H1 (cell line): ENCODE measurements at regions of chr11 and their contacts with region 1.

Region 1: DNA sequence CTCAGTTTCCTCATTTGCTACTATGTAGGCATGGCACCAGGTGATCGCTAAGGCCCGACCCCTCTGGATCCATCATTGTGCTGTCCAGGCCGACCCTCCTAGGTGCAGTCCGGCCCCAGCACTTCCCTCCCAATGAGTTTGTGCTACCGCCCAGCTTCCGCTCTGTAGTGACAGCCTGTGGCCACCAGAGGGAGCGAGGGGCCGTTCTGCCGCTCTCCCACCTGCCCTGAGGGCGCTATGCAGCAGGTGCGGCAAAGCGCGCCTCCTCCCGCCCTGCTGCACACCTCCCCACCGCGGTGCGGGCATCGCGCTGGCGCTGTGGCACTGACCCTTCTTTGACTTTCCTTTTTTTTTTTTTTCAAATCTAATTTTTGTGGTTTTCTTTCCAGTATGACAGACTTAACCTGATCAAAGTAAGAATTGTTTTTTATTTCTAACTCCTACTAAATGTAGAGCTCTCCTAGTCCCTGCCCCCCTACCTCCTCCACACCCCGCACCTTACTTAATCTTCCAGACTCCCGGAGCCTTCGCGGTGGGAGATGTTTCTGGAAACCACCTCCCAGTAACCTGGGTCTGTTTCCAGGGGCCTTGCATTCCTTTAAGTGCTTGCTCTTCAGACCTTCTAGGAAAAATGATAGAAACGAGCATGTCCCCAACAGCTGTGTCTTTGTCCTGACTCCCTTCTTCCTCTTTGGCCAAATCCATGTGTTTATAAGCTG is 73.7 kb downstream of the SCN3B start:
- DNase-seq: peak; percentile 67 to 87
- H3K4me3 ChIP-seq: peak overlapping the region in 1 of 4 experiments; percentile 31; a peak in 1 of 8 replicates
- H3K27ac ChIP-seq: no peak overlapping the region
- H3K4me1 ChIP-seq: peaks cover 0 to 10% (median 2%) of the 10 kb centered on the region in 4 experiments; a peak in 5 of 7 replicates
- H3K27me3 ChIP-seq: no peaks in the 10 kb centered on the region; a peak in 1 of 7 replicates
- CTCF ChIP-seq: peak; percentile 98 to 99 (median 98)
- EP300 ChIP-seq: peak in 1 of 2 experiments; percentile 27; a peak in 1 of 3 replicates
- POLR2A ChIP-seq: no peak
- RAD21 ChIP-seq: peak; percentile 74 to 80

Region 2: GRCh38 chr11:123429336-123429735 is 151.4 kb before region 1 on chr11:
- CTCF ChIA-PET with region 1: no interaction called
- POLR2A ChIA-PET with region 1: no interaction called
- DNase-seq: no peak
- H3K4me3 ChIP-seq: peak overlapping the region; percentile 31 to 88 (median 74); a peak in 5 of 8 replicates
- H3K27ac ChIP-seq: no peak overlapping the region
- H3K4me1 ChIP-seq: peaks cover 12 to 18% (median 14%) of the 10 kb centered on the region in 4 experiments
- H3K27me3 ChIP-seq: peaks cover 0 to 18% (median under 1%) of the 10 kb centered on the region in 4 experiments; a peak in 4 of 7 replicates
- CTCF ChIP-seq: no peak
- EP300 ChIP-seq: no peak
- POLR2A ChIP-seq: no peak
- RAD21 ChIP-seq: no peak

Region 3: GRCh38 chr11:123487157-123487780 is 93.4 kb before region 1 on chr11:
- CTCF ChIA-PET with region 1: interaction called, 14 read pairs
- POLR2A ChIA-PET with region 1: no interaction called
- DNase-seq: no peak
- H3K4me3 ChIP-seq: no peak overlapping the region
- H3K27ac ChIP-seq: no peak overlapping the region
- H3K4me1 ChIP-seq: peaks cover 0 to 2% (median 0%) of the 10 kb centered on the region in 4 experiments; a peak in 1 of 7 replicates
- H3K27me3 ChIP-seq: no peaks in the 10 kb centered on the region
- CTCF ChIP-seq: no peak
- EP300 ChIP-seq: no peak
- POLR2A ChIP-seq: no peak
- RAD21 ChIP-seq: no peak

Region 4: GRCh38 chr11:123505546-123506299 is 75.0 kb before region 1 on chr11:
- CTCF ChIA-PET with region 1: interaction called, 22 read pairs
- POLR2A ChIA-PET with region 1: interaction called, 4 read pairs
- DNase-seq: peak; percentile 25 to 64
- H3K4me3 ChIP-seq: no peak overlapping the region
- H3K27ac ChIP-seq: no peak overlapping the region
- H3K4me1 ChIP-seq: peaks cover 3 to 20% (median 16%) of the 10 kb centered on the region in 4 experiments
- H3K27me3 ChIP-seq: no peaks in the 10 kb centered on the region
- CTCF ChIP-seq: no peak
- EP300 ChIP-seq: no peak
- POLR2A ChIP-seq: no peak
- RAD21 ChIP-seq: no peak

Region 5: GRCh38 chr11:123519055-123519796 is 61.5 kb before region 1 on chr11:
- CTCF ChIA-PET with region 1: interaction called, 67 read pairs
- POLR2A ChIA-PET with region 1: no interaction called
- DNase-seq: peak in 1 of 2 experiments; percentile 52
- H3K4me3 ChIP-seq: no peak overlapping the region
- H3K27ac ChIP-seq: no peak overlapping the region
- H3K4me1 ChIP-seq: peaks cover 12 to 22% (median 16%) of the 10 kb centered on the region in 4 experiments
- H3K27me3 ChIP-seq: no peaks in the 10 kb centered on the region
- CTCF ChIP-seq: no peak
- EP300 ChIP-seq: no peak
- POLR2A ChIP-seq: no peak
- RAD21 ChIP-seq: no peak

Region 6: DNA sequence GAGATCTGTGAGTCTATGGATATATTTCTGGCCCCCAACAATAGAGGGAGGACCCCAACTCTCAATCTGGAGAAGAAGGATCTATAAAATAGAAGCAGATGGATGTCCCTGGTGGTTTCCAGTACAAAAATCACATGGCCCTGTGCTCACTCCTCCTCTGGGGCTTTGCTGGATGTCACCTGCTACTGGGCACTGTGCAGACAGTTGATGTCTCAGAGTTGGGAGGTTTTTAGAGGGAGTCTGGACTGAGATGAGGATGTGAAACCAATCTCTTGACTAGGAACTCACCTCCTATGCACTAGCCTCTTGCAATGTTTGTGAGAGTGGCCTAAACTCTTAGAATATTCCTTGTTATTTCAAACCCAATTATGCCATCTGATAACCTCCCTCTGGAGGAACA is 33.5 kb before region 1 on chr11:
- CTCF ChIA-PET with region 1: interaction called, 10 read pairs
- POLR2A ChIA-PET with region 1: no interaction called
- DNase-seq: no peak
- H3K4me3 ChIP-seq: no peak overlapping the region
- H3K27ac ChIP-seq: no peak overlapping the region
- H3K4me1 ChIP-seq: peaks cover 0 to 10% (median 5%) of the 10 kb centered on the region in 4 experiments; a peak in 4 of 7 replicates
- H3K27me3 ChIP-seq: no peaks in the 10 kb centered on the region
- CTCF ChIP-seq: no peak
- EP300 ChIP-seq: no peak
- POLR2A ChIP-seq: no peak
- RAD21 ChIP-seq: no peak

Region 7: GRCh38 chr11:123608371-123608770 is 27.7 kb after region 1 on chr11:
- CTCF ChIA-PET with region 1: interaction called, 10 read pairs
- POLR2A ChIA-PET with region 1: no interaction called
- DNase-seq: no peak
- H3K4me3 ChIP-seq: no peak overlapping the region
- H3K27ac ChIP-seq: no peak overlapping the region
- H3K4me1 ChIP-seq: no peaks in the 10 kb centered on the region
- H3K27me3 ChIP-seq: no peaks in the 10 kb centered on the region
- CTCF ChIP-seq: no peak
- EP300 ChIP-seq: no peak
- POLR2A ChIP-seq: no peak
- RAD21 ChIP-seq: no peak

Region 8: DNA sequence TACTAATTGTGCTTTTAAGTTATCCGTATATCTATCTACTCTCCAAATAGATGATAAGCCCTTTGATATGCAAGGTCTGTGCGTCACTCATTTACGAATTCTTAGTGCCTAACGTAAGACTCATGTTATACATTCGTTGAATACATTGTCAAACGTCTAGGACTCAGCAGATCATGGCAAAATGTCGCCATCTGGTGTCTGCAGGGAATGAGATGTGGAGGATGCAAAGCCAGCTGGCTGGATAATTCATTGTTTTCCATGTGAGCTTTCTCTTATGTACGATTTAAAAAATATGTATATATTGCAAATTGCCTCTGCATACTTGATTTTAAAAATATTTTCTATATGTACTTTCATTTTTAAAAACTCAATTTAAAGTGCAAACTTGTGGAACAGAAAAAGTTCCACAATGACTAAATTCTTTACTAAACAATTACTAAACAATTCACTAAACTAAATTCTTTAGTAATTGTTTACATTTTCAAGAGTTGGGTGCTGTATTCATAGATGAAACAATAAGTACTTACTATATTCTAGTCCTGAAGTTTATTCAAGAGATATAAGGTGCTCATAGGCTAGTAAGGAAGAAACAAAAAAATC is 127.0 kb after region 1 on chr11:
- CTCF ChIA-PET with region 1: interaction called, 24 read pairs
- POLR2A ChIA-PET with region 1: no interaction called
- DNase-seq: peak; percentile 15 to 71
- H3K4me3 ChIP-seq: no peak overlapping the region
- H3K27ac ChIP-seq: no peak overlapping the region
- H3K4me1 ChIP-seq: peaks cover 0 to 4% (median 0%) of the 10 kb centered on the region in 4 experiments; a peak in 2 of 7 replicates
- H3K27me3 ChIP-seq: no peaks in the 10 kb centered on the region
- CTCF ChIP-seq: peak; percentile 58 to 83 (median 81)
- EP300 ChIP-seq: no peak
- POLR2A ChIP-seq: no peak
- RAD21 ChIP-seq: peak; percentile 86 to 90

Region 9: DNA sequence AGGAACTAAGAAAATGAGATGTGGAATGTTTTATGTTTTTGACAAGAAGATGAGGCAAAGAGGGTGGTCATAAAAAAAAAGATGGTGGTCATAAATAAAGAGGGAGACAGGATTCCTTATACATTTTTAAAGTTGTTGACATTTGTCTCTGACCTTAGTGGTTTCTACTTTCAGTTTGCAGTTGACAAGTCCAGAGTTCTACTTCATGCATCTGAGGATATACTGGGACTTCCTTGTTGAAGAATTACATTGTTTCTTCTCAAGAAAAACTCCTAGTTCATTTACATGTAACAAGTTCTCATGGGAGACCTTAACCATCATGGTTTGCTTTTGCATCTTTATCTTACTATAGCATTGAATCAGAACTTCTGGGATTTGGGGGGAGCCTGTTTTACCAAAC is 172.4 kb after region 1 on chr11:
- CTCF ChIA-PET with region 1: no interaction called
- POLR2A ChIA-PET with region 1: no interaction called
- DNase-seq: no peak
- H3K4me3 ChIP-seq: no peak overlapping the region
- H3K27ac ChIP-seq: no peak overlapping the region
- H3K4me1 ChIP-seq: peaks cover 0 to 4% (median 1%) of the 10 kb centered on the region in 4 experiments; a peak in 1 of 7 replicates
- H3K27me3 ChIP-seq: no peaks in the 10 kb centered on the region
- CTCF ChIP-seq: no peak
- EP300 ChIP-seq: no peak
- POLR2A ChIP-seq: no peak
- RAD21 ChIP-seq: no peak

Region 10: GRCh38 chr11:123775289-123775688 is 194.6 kb after region 1 on chr11:
- CTCF ChIA-PET with region 1: no interaction called
- POLR2A ChIA-PET with region 1: no interaction called
- DNase-seq: peak in 1 of 2 experiments; percentile 53
- H3K4me3 ChIP-seq: peak overlapping the region in 1 of 4 experiments; percentile 27; a peak in 1 of 8 replicates
- H3K27ac ChIP-seq: no peak overlapping the region
- H3K4me1 ChIP-seq: peaks cover 0 to 30% (median 13%) of the 10 kb centered on the region in 4 experiments
- H3K27me3 ChIP-seq: no peaks in the 10 kb centered on the region
- CTCF ChIP-seq: no peak
- EP300 ChIP-seq: peak in 1 of 2 experiments; percentile 71; a peak in 1 of 3 replicates
- POLR2A ChIP-seq: no peak
- RAD21 ChIP-seq: no peak